ENCODE measurements at regions of chr14 and their contacts with region 1.

Region 1: GRCh38 chr14:60064491-60065072 is 27.1 kb upstream of the PCNX4 start:
- DNase-seq: peak; percentile 15
- ATAC-seq: peak; percentile 80
- H3K4me3 ChIP-seq: no peak overlapping the region
- H3K27ac ChIP-seq: no peak overlapping the region
- H3K4me1 ChIP-seq: no peaks in the 10 kb centered on the region
- H3K27me3 ChIP-seq: no peaks in the 10 kb centered on the region
- CTCF ChIP-seq: peak; percentile 41 to 71 (median 52); a peak in 5 of 6 replicates
- EP300 ChIP-seq: no peak
- POLR2A ChIP-seq: no peak
- RAD21 ChIP-seq: peak; percentile 70

Region 2: GRCh38 chr14:60561845-60562746 is 497.5 kb after region 1 on chr14:
- CTCF ChIA-PET with region 1: interaction called, 4 read pairs
- POLR2A ChIA-PET with region 1: no interaction called
- RAD21 ChIA-PET with region 1: interaction called, 3 read pairs
- SMC1A ChIA-PET with region 1: interaction called, 12 read pairs
- in situ Hi-C with region 1: loop called (anchors 5 kb)
- intact Hi-C with region 1: loop called (anchors 1 kb)
- DNase-seq: peak; percentile 19
- ATAC-seq: peak; percentile 94
- H3K4me3 ChIP-seq: no peak overlapping the region
- H3K27ac ChIP-seq: no peak overlapping the region
- H3K4me1 ChIP-seq: 0 out of 2 replicates have a peak, but pooled peaks cover 5% of the 10 kb centered on the region
- H3K27me3 ChIP-seq: no peaks in the 10 kb centered on the region
- CTCF ChIP-seq: peak; percentile 72 to 90 (median 79)
- EP300 ChIP-seq: no peak
- POLR2A ChIP-seq: no peak
- RAD21 ChIP-seq: peak; percentile 89

Measured in GM12878 (cell line).